Left cardiac atrium (tissue), 4 donors: ENCODE measurements at regions of chr3 and their contacts with region 1.

Region 1: GRCh38 chr3:172124271-172124670 is 84.9 kb downstream of the FNDC3B start:
- DNase-seq: no peak
- ATAC-seq: no peak

Region 2: GRCh38 chr3:172061724-172062184 is 62.5 kb before region 1 on chr3:
- intact Hi-C with region 1: loop called in 1 of 2 experiments (anchors 5 kb)
- DNase-seq: no peak
- ATAC-seq: peak; percentile 43 to 48